MCF 10A (cell line): ENCODE measurements at regions of chr22 and their contacts with region 1.

Region 1: DNA sequence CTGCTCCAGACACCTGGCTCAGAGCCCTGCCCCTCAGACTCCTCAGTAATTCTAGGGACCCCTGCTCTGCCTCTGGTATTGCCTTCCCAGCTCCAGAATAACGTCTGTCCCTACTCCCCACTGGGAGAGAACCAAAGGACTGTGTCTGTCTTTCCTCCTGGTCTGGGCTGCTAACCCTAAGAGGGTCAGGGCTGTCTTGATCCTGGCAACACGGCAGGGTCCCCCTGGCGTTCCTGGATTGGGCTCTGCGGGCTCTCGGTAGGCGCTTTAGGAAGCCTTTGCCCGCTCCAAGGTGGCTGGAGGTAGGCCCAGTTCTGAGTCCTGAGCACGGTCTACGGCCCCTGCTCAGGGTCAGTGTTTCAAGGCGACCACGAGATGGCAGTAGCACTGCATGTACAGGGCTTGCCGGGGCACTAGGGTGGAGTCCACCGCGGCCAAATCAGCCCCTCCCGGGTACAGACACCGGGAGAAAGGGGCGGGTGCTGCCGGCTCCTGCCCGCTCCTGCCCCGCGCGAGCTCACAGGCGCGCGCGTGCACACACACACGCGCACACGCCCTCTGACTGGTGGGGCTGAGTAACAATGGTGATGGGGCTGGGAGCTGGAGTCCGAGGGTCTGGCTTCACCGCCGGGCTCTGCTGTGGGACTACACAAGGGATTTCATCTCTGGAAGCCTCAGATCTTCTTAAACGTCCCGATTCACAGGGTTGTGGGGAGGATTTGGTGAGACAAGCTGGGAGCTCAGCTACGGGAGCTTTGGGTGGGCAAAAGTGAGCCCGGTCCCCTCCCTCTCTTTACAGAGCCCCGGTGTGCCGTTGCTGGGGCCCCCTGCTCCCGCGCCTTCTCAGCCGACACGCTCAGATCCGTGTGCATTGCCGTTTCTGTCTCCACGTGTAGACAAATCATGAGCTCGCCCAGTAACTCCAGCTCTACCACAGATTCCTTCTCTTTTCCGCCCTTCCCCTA is 30.1 kb upstream of the HMOX1 start:
- DNase-seq: peak; percentile 91
- H3K4me3 Mint-ChIP-seq: peak overlapping the region; percentile 74
- H3K27ac Mint-ChIP-seq: no peak overlapping the region
- H3K4me1 Mint-ChIP-seq: peaks cover 11% of the 10 kb centered on the region
- H3K27me3 Mint-ChIP-seq: no peaks in the 10 kb centered on the region
- CTCF ChIP-seq: peak; percentile 92

Region 2: GRCh38 chr22:34579519-34579918 is 771.3 kb before region 1 on chr22:
- CTCF ChIA-PET with region 1: no interaction called
- POLR2A ChIA-PET with region 1: no interaction called
- intact Hi-C with region 1: no loop called
- DNase-seq: no peak
- H3K4me3 Mint-ChIP-seq: no peak overlapping the region
- H3K27ac Mint-ChIP-seq: no peak overlapping the region
- H3K4me1 Mint-ChIP-seq: no peaks in the 10 kb centered on the region
- H3K27me3 Mint-ChIP-seq: no peaks in the 10 kb centered on the region
- CTCF ChIP-seq: no peak

Region 3: GRCh38 chr22:35376728-35377472 is 26.1 kb after region 1 on chr22:
- CTCF ChIA-PET with region 1: interaction called, 18 read pairs
- POLR2A ChIA-PET with region 1: interaction called, 3 read pairs
- intact Hi-C with region 1: loop called (anchors 2 kb)
- DNase-seq: peak; percentile 98
- H3K4me3 Mint-ChIP-seq: no peak overlapping the region
- H3K27ac Mint-ChIP-seq: peak overlapping the region; percentile 93
- H3K4me1 Mint-ChIP-seq: peaks cover 35% of the 10 kb centered on the region
- H3K27me3 Mint-ChIP-seq: no peaks in the 10 kb centered on the region
- CTCF ChIP-seq: no peak

Region 4: DNA sequence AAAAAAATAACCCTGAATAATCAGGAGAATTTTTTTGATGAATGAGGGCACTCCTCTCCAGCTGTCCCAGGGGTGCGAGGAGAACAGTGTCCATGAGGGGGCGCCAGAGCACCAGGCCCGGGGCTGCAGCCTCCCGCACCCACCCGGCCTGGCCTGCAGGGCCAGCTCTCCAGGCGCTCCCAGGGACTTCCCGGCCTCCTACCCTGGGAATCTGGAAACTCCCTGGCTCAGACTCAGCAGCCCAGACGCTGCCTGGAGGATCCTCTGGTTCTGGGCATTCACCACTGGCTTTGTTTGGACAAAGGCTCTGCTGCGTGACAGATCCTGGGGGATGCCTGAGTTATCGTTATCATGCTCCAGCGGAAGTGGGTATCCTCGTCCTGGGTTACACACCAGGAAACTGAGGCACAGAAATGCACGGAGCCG is 80.1 kb after region 1 on chr22:
- CTCF ChIA-PET with region 1: interaction called, 8 read pairs
- POLR2A ChIA-PET with region 1: no interaction called
- intact Hi-C with region 1: loop called (anchors 1 kb)
- DNase-seq: peak; percentile 84
- H3K4me3 Mint-ChIP-seq: no peak overlapping the region
- H3K27ac Mint-ChIP-seq: no peak overlapping the region
- H3K4me1 Mint-ChIP-seq: peaks cover 10% of the 10 kb centered on the region
- H3K27me3 Mint-ChIP-seq: no peaks in the 10 kb centered on the region
- CTCF ChIP-seq: peak; percentile 94

Region 5: GRCh38 chr22:35582861-35583670 is 232.2 kb after region 1 on chr22:
- CTCF ChIA-PET with region 1: interaction called, 10 read pairs
- POLR2A ChIA-PET with region 1: no interaction called
- intact Hi-C with region 1: loop called (anchors 1 kb)
- DNase-seq: peak; percentile 61
- H3K4me3 Mint-ChIP-seq: no peak overlapping the region
- H3K27ac Mint-ChIP-seq: no peak overlapping the region
- H3K4me1 Mint-ChIP-seq: peaks cover 4% of the 10 kb centered on the region
- H3K27me3 Mint-ChIP-seq: no peaks in the 10 kb centered on the region
- CTCF ChIP-seq: peak; percentile 91

Region 6: GRCh38 chr22:35589071-35589952 is 238.5 kb after region 1 on chr22:
- CTCF ChIA-PET with region 1: interaction called, 8 read pairs
- POLR2A ChIA-PET with region 1: no interaction called
- intact Hi-C with region 1: loop called (anchors 1 kb)
- DNase-seq: peak; percentile 97
- H3K4me3 Mint-ChIP-seq: no peak overlapping the region
- H3K27ac Mint-ChIP-seq: peak overlapping the region; percentile 36
- H3K4me1 Mint-ChIP-seq: peaks cover 32% of the 10 kb centered on the region
- H3K27me3 Mint-ChIP-seq: no peaks in the 10 kb centered on the region
- CTCF ChIP-seq: no peak

Region 7: GRCh38 chr22:35921777-35922176 is 571.0 kb after region 1 on chr22:
- CTCF ChIA-PET with region 1: no interaction called
- POLR2A ChIA-PET with region 1: no interaction called
- intact Hi-C with region 1: loop called (anchors 2 kb)
- DNase-seq: peak; percentile 93
- H3K4me3 Mint-ChIP-seq: no peak overlapping the region
- H3K27ac Mint-ChIP-seq: no peak overlapping the region
- H3K4me1 Mint-ChIP-seq: peaks cover 27% of the 10 kb centered on the region
- H3K27me3 Mint-ChIP-seq: no peaks in the 10 kb centered on the region
- CTCF ChIP-seq: peak; percentile 72